BJ (cell line): ENCODE measurements at regions of chr7 and their contacts with region 1.

Region 1: GRCh38 chr7:149598721-149599306 is 101.2 kb upstream of the ZNF746 start:
- DNase-seq: no peak
- H3K4me3 ChIP-seq: no peak overlapping the region
- H3K27me3 ChIP-seq: no peaks in the 10 kb centered on the region
- CTCF ChIP-seq: peak; percentile 58

Region 2: DNA sequence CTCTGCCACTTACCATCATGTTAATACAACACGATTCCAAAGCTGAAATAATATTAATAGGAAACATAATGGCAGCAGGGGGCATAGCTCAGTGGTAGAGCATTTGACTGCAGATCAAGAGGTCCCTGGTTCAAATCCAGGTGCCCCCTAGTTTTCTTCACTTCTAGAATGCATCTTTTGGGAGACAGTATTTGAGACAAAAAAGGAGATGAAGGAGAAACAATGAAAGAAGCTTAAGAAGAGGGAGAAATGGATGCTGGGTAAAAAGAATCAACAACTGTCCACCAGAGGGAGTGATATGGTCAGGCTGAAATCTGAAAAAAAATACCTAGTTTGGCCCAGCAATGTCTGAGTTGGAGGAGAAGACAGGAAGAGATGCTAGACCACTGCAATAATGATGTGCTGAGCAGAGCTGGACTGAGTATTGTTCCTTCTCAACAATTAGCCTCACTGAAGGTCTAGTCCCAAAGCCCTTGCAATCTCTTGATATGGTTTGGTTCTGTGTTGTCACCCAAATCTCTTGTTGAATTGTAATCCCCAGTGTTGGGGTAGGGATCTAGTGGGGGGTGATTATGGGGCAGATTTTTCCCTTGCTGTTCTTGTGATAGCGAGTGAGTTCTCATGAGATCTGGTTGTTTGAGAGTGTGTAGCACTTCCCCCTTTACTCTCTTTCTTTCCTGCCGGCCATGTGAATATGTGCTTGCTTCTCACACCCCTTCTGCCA is 288.5 kb before region 1 on chr7:
- CTCF ChIA-PET with region 1: interaction called, 17 read pairs
- POLR2A ChIA-PET with region 1: no interaction called
- DNase-seq: peak; percentile 22
- H3K4me3 ChIP-seq: no peak overlapping the region
- H3K27me3 ChIP-seq: peaks cover 2% of the 10 kb centered on the region
- CTCF ChIP-seq: peak; percentile 65

Region 3: GRCh38 chr7:149496642-149497391 is 102.0 kb before region 1 on chr7:
- CTCF ChIA-PET with region 1: interaction called, 13 read pairs
- POLR2A ChIA-PET with region 1: no interaction called
- DNase-seq: no peak
- H3K4me3 ChIP-seq: peak overlapping the region; percentile 61
- H3K27me3 ChIP-seq: peaks cover 6% of the 10 kb centered on the region
- CTCF ChIP-seq: no peak

Region 4: GRCh38 chr7:149529136-149529718 is 69.6 kb before region 1 on chr7:
- CTCF ChIA-PET with region 1: no interaction called
- POLR2A ChIA-PET with region 1: no interaction called
- DNase-seq: no peak
- H3K4me3 ChIP-seq: no peak overlapping the region
- H3K27me3 ChIP-seq: no peaks in the 10 kb centered on the region
- CTCF ChIP-seq: no peak

Region 5: DNA sequence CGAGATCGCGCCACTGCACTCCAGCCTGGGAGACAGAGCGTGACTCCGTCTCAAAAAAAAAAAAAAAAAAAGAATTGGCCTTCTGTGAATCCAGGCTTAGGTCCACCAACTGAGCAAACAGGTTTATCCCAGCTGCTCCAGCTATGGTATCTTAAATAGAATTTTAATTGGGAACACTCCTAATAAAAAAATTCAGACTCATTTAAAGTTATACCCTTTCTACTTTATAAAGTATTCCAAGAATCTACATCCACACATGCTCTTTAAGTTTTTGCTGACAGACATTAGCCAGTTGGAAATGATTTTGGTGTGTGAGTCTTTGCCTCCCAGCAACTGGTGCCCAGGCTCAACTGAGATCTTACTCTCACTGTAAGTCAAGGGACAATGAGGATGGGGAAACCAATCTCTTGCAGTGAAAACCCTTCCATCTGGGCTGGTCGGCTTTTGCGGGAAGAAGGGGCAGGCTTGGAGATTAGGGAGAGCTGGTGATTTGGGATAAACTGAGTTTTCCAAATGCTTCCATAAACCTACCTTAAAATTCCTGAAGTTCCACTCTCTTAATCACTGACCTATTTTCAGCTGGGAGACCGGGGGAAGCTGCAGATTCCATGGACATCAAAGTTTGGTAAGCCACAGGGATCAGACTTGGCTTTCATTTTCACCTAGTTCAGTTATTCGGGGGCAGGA is 12.0 kb before region 1 on chr7:
- CTCF ChIA-PET with region 1: interaction called, 15 read pairs
- POLR2A ChIA-PET with region 1: no interaction called
- DNase-seq: peak; percentile 72
- H3K4me3 ChIP-seq: no peak overlapping the region
- H3K27me3 ChIP-seq: no peaks in the 10 kb centered on the region
- CTCF ChIP-seq: no peak